GM10248 (cell line): ENCODE measurements at regions of chr7 and their contacts with region 1.

Region 1: GRCh38 chr7:81469869-81470723 is 299.8 kb downstream of the HGF start:
- DNase-seq: peak; percentile 20
- CTCF ChIP-seq: peak; percentile 58

Region 2: DNA sequence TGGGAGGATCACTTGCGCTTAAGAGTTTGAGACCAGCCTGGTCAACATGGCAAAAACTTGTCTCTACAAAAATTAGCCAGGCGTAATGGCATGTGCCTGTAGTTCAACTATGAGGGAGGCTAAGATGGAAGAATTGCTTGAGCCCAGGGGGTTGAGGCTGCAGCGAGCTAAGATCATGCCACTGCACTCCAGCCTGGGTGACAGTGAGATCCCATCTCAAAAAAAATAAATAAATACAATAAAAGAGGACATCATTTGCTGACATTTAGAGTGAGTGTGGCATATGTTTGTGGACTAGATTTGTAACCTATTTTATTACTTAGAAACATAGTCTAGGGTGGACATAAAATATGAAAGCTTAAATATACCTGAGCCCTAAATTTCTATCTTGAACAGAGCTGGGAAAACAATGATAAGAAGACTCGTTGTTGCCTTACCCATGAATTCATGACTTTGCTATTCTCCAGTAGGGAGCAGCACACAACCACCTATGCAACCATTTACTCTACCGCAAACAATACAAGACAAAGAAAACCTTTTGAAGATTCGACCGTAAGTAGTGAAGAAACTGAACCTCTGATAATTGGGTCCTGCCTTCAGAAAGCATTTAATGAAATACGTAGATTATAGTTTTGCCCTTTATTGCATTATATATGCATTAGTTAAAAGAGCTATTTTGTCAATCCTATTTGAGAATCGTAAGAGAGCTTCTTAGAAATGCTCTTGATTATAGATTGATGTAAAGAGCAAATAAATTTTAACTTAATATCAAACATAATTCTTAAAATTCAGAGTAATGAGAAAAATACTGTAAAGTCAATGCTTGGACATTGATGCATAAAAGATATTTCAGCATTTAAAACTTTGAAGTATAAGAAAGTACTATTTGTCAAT is 1041.7 kb before region 1 on chr7:
- CTCF ChIA-PET with region 1: interaction called, 14 read pairs
- POLR2A ChIA-PET with region 1: no interaction called
- DNase-seq: peak; percentile 17
- CTCF ChIP-seq: peak; percentile 45

Region 3: DNA sequence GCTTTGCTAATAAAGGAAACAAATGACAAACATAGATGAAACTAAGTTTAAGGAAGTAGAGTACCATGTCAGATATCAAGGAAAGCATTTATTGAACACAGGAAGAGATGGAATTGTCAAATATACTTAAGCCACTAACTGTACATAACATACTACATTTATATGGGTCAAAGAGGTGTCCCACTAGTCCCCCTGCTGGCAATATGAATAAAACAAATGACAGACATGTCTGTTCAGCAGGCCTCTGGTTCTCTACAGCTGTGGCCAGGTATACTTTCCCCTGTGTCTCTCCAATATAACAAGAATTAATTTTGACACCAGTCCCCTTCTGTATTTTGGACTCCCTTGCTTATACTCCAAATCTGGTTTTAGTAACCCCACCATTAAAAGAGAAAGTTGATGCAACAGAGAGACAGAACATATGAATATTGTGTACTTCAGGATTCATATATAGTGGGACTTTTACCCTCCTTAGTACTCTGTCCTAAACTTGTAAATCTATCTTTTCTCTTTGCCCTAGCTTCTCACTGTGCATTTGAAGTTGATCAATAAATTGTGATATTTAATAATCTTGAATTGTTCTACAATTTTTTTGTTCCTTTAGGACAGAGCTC is 788.7 kb before region 1 on chr7:
- CTCF ChIA-PET with region 1: no interaction called
- POLR2A ChIA-PET with region 1: no interaction called
- DNase-seq: peak; percentile 6
- CTCF ChIP-seq: no peak

Region 4: DNA sequence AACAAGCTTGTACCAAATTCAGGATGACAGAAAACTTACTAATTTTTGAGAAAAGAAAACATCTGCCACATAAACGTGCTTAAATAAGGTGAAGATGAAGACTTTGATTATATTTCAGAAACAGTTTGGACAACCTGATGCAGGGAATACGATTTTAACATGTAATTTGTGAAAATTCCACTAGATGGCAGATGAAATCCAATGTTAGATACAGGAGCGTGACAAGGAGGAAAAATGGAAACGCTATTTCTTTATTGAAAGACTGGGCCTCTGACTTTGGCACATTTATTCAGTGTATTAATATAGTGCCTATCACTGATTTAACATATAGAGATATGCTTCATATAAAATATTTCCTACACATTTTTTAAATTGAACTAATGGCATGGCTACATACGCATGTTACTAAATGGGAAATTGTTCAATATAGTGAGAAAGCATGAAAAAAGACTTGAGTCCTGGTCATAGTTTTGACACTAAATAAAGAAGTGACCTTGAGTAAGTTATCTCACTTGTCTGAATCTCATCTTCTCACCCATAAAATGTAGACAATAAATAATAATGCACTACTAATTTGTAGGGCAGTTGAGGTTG is 771.0 kb before region 1 on chr7:
- CTCF ChIA-PET with region 1: interaction called, 34 read pairs
- POLR2A ChIA-PET with region 1: no interaction called
- DNase-seq: peak; percentile 9
- CTCF ChIP-seq: peak; percentile 54

Region 5: DNA sequence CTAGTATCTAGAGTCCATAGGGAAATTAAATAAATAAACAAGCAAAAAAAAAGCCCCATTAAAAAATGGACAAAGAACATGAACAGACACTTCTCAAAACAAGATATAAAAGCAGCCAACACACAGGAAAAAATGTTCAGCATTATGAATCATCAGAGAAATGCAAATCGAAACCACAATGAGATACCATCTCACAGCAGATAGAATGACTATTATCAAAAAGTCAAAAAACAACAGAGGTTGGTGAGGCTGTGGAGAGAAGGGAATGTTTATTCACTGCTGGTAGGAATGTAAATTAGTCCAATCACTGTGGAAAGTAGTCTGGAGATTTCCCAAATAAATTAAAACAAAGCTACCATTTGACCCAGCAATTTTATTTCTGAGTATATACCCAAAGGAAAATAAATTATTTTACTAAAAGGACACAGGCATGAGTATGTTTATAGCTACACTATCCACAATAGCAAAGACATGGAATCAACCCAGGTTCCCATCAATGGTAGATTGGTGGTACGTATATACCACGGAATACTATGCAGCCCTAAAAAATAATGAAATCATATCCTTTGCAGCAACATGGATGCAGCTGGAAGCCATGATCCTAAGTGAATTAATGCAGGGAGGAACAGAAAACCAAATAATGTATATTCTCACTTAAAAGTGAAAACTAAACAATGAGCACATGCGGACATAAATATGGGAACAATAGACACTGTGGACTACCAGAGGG is 184.8 kb before region 1 on chr7:
- CTCF ChIA-PET with region 1: no interaction called
- POLR2A ChIA-PET with region 1: no interaction called
- DNase-seq: no peak
- CTCF ChIP-seq: no peak

Region 6: DNA sequence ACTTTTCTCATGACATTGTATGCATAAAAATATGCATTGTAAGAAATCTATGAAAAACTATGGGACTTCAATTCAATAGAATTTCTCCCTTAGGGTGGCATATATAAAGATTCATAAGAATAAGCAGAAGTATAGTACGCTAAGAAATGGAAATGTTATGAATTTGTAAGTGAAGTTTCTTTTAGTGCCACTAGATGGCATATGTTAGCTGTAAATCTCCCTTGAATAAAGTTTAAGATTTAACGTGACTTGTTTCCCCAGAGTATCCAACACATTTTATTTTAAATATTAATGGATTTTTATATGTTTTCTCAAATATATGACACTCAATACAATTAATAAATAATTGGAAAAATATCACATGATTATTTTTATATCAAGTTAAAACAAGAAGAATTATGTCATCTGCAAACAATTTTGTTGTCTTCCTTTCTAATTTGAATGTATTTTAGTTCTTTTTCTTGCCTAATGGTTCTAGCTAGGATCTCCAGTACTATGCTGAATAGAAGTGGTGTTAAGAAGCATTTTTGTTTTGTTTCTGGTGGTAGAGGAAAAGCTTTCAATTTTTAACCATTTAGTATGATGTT is 12.6 kb after region 1 on chr7:
- CTCF ChIA-PET with region 1: interaction called, 10 read pairs
- POLR2A ChIA-PET with region 1: no interaction called
- DNase-seq: peak; percentile 26
- CTCF ChIP-seq: peak; percentile 48

Region 7: DNA sequence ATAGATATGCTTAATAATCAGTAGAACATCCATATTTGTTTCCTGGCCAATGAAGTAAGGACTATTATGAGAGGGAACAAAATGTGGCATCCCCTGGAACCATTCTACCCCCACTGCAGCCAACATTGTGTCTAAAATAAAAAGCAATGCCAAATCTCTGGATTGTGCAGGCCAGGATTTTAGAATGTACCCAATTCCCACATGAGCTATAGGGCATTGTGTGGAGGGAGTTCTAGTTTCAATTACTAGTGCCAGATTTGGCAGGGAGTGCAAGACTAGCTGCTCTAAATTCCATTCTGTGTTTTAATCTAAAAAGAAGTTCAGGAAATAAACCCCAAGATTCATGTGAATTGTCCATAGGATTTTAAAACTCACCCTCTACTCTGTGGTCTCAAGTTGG is 187.5 kb after region 1 on chr7:
- CTCF ChIA-PET with region 1: no interaction called
- POLR2A ChIA-PET with region 1: no interaction called
- DNase-seq: no peak
- CTCF ChIP-seq: no peak